ENCODE measurements at regions of chr11 and their contacts with region 1.

Region 1: GRCh38 chr11:111230122-111230465 is 15.4 kb upstream of the POU2AF2 start:
- DNase-seq: no peak
- ATAC-seq: peak; percentile 48
- H3K4me3 ChIP-seq: peak overlapping the region; percentile 49
- H3K4me3 Mint-ChIP-seq: peak overlapping the region; percentile 23 to 81 (median 58)
- H3K27ac ChIP-seq: no peak overlapping the region
- H3K27ac Mint-ChIP-seq: no peak overlapping the region
- H3K4me1 ChIP-seq: no peaks in the 10 kb centered on the region
- H3K4me1 Mint-ChIP-seq: peaks cover 0 to 24% (median 16%) of the 10 kb centered on the region in 7 donors
- H3K27me3 ChIP-seq: no peaks in the 10 kb centered on the region
- H3K27me3 Mint-ChIP-seq: peaks cover 20 to 27% (median 27%) of the 10 kb centered on the region in 5 donors

Region 2: DNA sequence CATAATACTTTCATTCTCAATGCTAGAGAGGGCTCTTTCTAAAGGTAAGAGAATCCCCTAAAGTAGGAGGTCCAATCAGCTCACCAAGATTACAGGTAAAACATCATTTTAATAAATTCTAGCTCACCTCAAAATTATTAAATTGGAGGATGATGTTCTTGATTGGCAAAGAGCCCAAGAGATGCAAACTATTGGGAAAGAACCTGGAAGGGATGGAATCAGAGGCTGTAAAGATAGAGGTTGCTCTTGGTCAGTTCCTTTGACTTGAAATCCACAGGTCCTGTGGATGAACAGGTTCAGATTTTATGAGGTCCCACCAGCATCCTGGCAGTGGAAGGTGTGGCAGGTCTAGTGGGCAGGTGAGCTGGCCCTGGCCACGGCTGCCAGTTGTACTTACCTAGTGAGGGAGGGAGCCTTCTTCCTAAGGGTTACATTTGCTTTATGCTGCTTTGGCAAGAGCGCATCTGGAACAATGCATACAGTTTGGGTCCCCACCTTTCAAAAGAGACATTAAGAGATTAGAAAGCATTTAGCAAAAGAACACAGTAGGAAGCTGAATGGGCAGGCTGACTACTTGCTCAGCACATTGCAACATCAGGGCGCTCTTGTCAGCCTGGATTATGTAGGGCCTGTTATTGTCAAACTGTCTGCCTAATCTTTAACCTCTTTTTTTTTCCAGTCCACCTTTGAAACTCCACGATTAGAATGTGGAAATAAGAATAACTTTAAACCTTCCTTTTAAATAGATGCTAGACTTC is 1030.7 kb before region 1 on chr11:
- CTCF ChIA-PET with region 1: interaction called, 9 read pairs
- POLR2A ChIA-PET with region 1: no interaction called
- intact Hi-C with region 1: loop called in 1 of 2 experiments (anchors 1 kb)
- DNase-seq: no peak
- ATAC-seq: no peak
- H3K4me3 ChIP-seq: no peak overlapping the region
- H3K4me3 Mint-ChIP-seq: no peak overlapping the region
- H3K27ac ChIP-seq: no peak overlapping the region
- H3K27ac Mint-ChIP-seq: no peak overlapping the region
- H3K4me1 ChIP-seq: no peaks in the 10 kb centered on the region
- H3K4me1 Mint-ChIP-seq: peaks cover 0 to 4% (median 0%) of the 10 kb centered on the region in 7 donors
- H3K27me3 ChIP-seq: no peaks in the 10 kb centered on the region
- H3K27me3 Mint-ChIP-seq: peaks cover 0 to 9% (median 2%) of the 10 kb centered on the region in 5 donors

Region 3: DNA sequence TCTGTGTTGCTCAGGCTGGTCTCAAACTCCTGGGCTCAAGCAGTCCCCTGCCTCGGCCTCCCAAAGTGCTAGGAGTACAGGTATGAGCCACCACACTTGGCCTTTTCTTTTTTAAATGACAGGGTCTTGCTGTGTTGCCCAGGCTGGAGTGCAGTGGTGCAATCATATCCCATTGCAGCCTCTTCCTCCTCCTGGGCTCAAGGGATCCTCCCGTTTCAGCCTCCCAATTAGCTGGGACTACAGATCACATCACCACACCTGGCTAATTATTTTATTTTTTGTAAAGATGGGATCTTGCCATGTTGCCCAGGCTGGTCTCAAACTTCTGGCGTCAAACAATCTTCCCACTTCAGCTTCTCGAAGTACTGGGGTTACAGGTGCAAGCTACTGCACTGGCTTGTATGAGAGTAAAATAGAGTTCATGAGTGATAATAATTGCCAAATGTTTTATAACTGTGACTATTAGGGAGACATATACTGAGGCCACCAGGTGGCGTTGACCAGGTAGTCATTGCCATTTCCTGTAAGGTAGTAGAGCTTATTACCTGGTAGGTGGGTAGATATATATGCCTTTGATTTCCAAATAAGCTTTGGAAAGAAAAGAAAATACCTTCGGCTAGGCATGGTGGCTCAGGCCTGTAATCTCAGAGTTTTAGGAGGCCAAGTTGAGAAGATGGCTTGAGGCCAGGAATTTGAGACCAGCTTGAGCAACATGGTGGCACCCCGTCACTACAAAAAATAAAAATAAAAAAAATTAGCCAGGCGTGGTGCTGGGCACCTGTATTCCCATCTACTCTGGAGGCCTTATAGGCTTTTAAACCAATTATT is 794.9 kb before region 1 on chr11:
- CTCF ChIA-PET with region 1: interaction called, 12 read pairs
- POLR2A ChIA-PET with region 1: no interaction called
- intact Hi-C with region 1: loop called (anchors 1 kb)
- DNase-seq: no peak
- ATAC-seq: no peak
- H3K4me3 ChIP-seq: no peak overlapping the region
- H3K4me3 Mint-ChIP-seq: no peak overlapping the region
- H3K27ac ChIP-seq: no peak overlapping the region
- H3K27ac Mint-ChIP-seq: no peak overlapping the region
- H3K4me1 ChIP-seq: peaks cover 6 to 12% of the 10 kb centered on the region in 2 donors
- H3K4me1 Mint-ChIP-seq: peaks cover 38 to 69% (median 61%) of the 10 kb centered on the region in 7 donors
- H3K27me3 ChIP-seq: no peaks in the 10 kb centered on the region
- H3K27me3 Mint-ChIP-seq: no peaks in the 10 kb centered on the region

Region 4: GRCh38 chr11:110463153-110463552 is 766.9 kb before region 1 on chr11:
- CTCF ChIA-PET with region 1: no interaction called
- POLR2A ChIA-PET with region 1: no interaction called
- intact Hi-C with region 1: loop called in 1 of 2 experiments (anchors 5 kb)
- DNase-seq: peak in 2 of 9 donors; percentile 7 to 9
- ATAC-seq: peak; percentile 64
- H3K4me3 ChIP-seq: no peak overlapping the region
- H3K4me3 Mint-ChIP-seq: no peak overlapping the region
- H3K27ac ChIP-seq: no peak overlapping the region
- H3K27ac Mint-ChIP-seq: peak overlapping the region in 1 of 9 donors; percentile 63
- H3K4me1 ChIP-seq: no peaks in the 10 kb centered on the region
- H3K4me1 Mint-ChIP-seq: peaks cover 0 to 10% (median 2%) of the 10 kb centered on the region in 7 donors
- H3K27me3 ChIP-seq: no peaks in the 10 kb centered on the region
- H3K27me3 Mint-ChIP-seq: no peaks in the 10 kb centered on the region